Heart left ventricle (tissue), 16 donors: ENCODE measurements at regions of chr5 and their contacts with region 1.

Region 1: DNA sequence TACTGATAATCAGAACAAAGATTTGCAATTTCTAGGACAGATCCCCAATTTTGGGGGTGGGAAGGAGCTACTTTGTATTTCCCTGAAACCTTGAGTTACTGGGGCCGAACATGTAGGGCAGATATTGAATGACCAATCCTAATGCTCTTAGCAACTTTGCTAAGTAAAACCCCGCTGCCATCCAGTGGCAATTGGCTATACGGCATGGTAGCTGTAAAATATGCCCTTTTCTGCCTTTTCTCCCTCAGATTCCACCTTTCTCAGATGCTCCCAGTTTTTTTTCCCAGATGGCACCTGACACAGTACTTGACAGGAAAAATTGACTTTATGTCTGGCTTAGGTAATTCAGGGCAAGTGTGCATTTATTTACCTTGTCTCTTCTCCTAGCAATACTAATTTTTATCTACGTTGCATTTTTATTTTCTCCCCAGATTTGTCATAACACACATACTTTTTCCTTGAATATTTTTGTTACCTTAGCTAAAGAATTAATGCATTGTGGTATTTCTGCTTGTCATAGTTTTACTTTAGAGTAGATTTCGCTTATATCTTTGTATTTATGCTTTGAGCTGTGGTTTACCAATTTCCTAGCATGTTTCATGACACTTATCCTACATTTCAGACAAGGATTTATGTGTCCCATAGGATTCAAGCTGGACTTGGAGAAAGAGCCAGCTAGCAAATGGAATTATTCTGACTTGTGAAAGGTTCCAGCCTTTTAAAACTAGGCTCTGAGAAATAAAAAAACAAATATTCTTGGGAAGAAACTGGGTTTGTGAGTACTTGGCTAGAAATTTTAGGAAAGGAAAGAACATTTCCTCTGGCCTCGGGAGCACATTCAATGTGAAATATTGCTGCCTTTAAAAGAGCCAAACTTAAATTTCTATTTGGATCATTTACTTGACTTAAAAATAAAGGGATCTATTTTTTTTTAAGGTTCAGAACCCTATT is 37.4 kb downstream of the PIK3R1 start:
- DNase-seq: peak in 4 of 5 donors; percentile 50 to 61 (median 60)
- ATAC-seq: peak; percentile 37 to 79 (median 74)
- H3K4me3 ChIP-seq: peak overlapping the region in 6 of 12 donors; percentile 1 to 24 (median 8)
- H3K27ac ChIP-seq: peak overlapping the region; percentile 21 to 85 (median 77)
- H3K4me1 ChIP-seq: peaks cover 9 to 100% (median 98%) of the 10 kb centered on the region in 12 donors
- H3K27me3 ChIP-seq: no peaks in the 10 kb centered on the region
- CTCF ChIP-seq: peak; percentile 53 to 83 (median 76)
- POLR2A ChIP-seq: no peak

Region 2: GRCh38 chr5:67493676-67494075 is 759.3 kb before region 1 on chr5:
- intact Hi-C with region 1: loop called in 5 of 10 experiments (anchors 2 to 10 kb)
- DNase-seq: peak; percentile 32 to 60 (median 43)
- ATAC-seq: peak; percentile 91 to 96 (median 94)
- H3K4me3 ChIP-seq: no peak overlapping the region
- H3K27ac ChIP-seq: peak overlapping the region in 1 of 12 donors; percentile 63
- H3K4me1 ChIP-seq: peaks cover 0 to 9% (median 0%) of the 10 kb centered on the region in 12 donors
- H3K27me3 ChIP-seq: no peaks in the 10 kb centered on the region
- CTCF ChIP-seq: peak; percentile 20 to 62 (median 46)
- POLR2A ChIP-seq: no peak

Region 3: GRCh38 chr5:67509402-67510186 is 743.4 kb before region 1 on chr5:
- intact Hi-C with region 1: loop called in 1 of 10 experiments (anchors 10 kb)
- DNase-seq: no peak
- ATAC-seq: no peak
- H3K4me3 ChIP-seq: no peak overlapping the region
- H3K27ac ChIP-seq: no peak overlapping the region
- H3K4me1 ChIP-seq: no peaks in the 10 kb centered on the region
- H3K27me3 ChIP-seq: no peaks in the 10 kb centered on the region
- CTCF ChIP-seq: no peak
- POLR2A ChIP-seq: no peak

Region 4: DNA sequence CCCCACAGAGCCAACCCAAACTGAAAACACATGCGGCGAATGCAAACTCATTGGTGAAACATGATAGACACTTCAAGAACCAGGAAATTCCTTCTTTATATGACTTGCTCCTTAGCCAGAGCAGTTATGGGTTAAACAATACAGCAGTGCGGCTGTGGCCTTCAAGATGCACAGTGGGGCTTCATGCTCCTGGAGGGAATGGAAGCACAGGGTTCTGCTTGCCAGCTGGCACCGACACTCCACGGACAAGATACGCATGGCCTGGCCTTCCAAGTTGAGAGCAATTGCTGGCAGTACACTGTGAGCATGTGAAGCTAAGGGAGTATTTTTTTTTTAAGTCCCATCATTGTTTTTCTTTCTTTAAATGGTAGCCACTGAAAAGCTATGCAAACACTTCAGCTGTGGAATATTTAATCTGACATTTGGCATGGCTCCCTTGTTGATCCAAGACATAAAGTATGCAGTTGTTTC is 604.7 kb before region 1 on chr5:
- intact Hi-C with region 1: loop called in 2 of 10 experiments (anchors 10 kb)
- DNase-seq: peak; percentile 75 to 90 (median 85)
- ATAC-seq: peak; percentile 97 to 98 (median 98)
- H3K4me3 ChIP-seq: no peak overlapping the region
- H3K27ac ChIP-seq: peak overlapping the region in 9 of 12 donors; percentile 44 to 87 (median 68)
- H3K4me1 ChIP-seq: peaks cover 0 to 38% (median 12%) of the 10 kb centered on the region in 12 donors
- H3K27me3 ChIP-seq: no peaks in the 10 kb centered on the region
- CTCF ChIP-seq: no peak
- POLR2A ChIP-seq: no peak

Region 5: GRCh38 chr5:68369457-68370125 is 116.6 kb after region 1 on chr5:
- intact Hi-C with region 1: no loop called
- DNase-seq: no peak
- ATAC-seq: no peak
- H3K4me3 ChIP-seq: no peak overlapping the region
- H3K27ac ChIP-seq: peak overlapping the region in 1 of 12 donors; percentile 22
- H3K4me1 ChIP-seq: peaks cover 0 to 38% (median 0%) of the 10 kb centered on the region in 12 donors
- H3K27me3 ChIP-seq: no peaks in the 10 kb centered on the region
- CTCF ChIP-seq: no peak
- POLR2A ChIP-seq: no peak